Right cardiac atrium (tissue), 5 donors: ENCODE measurements at regions of chr9 and their contacts with region 1.

Region 1: GRCh38 chr9:91422758-91423711 is 597 bp downstream of the NFIL3 start:
- DNase-seq: peak; percentile 68 to 83 (median 83)
- ATAC-seq: peak; percentile 4 to 10
- H3K4me3 ChIP-seq: peak overlapping the region; percentile 100
- H3K27ac ChIP-seq: peak overlapping the region; percentile 97
- H3K4me1 ChIP-seq: peaks cover 9% of the 10 kb centered on the region
- H3K27me3 ChIP-seq: no peaks in the 10 kb centered on the region

Region 2: GRCh38 chr9:90147426-90147825 is 1275.6 kb before region 1 on chr9:
- intact Hi-C with region 1: no loop called
- DNase-seq: no peak
- ATAC-seq: no peak
- H3K4me3 ChIP-seq: no peak overlapping the region
- H3K27ac ChIP-seq: no peak overlapping the region
- H3K4me1 ChIP-seq: no peaks in the 10 kb centered on the region
- H3K27me3 ChIP-seq: no peaks in the 10 kb centered on the region

Region 3: DNA sequence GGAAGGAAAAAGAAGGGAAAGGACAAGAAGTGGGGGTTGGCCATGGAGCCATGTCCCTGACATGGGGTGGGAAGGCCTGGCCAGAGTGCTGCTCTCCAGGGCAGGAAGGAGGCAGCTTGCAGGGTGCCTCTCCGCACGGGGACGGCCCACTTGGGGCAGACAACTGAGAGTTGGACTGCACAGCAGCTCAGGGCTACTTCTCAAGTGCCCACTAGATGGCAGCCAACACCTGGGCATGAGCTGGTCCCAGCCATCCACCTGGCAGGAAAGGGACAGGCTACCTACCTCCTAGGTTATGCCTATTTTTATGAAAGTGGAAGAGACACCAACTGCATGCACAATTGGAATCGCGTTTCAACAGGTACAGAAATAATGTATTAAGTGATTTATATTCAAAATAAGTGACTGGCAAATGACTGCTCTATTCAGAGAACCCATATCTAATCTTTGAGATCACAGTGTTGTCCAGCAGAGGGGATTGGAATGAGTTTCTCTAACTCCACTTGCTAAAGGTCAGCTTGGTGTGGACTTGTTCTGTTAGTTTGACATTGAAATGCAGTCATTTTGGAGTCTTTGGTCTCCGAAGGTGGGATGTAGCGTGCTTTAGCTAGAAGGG is 508.1 kb before region 1 on chr9:
- intact Hi-C with region 1: loop called in 1 of 4 experiments (anchors 5 kb)
- DNase-seq: peak; percentile 63 to 87 (median 80)
- ATAC-seq: peak; percentile 81 to 90
- H3K4me3 ChIP-seq: no peak overlapping the region
- H3K27ac ChIP-seq: no peak overlapping the region
- H3K4me1 ChIP-seq: peaks cover 4% of the 10 kb centered on the region
- H3K27me3 ChIP-seq: no peaks in the 10 kb centered on the region

Region 4: DNA sequence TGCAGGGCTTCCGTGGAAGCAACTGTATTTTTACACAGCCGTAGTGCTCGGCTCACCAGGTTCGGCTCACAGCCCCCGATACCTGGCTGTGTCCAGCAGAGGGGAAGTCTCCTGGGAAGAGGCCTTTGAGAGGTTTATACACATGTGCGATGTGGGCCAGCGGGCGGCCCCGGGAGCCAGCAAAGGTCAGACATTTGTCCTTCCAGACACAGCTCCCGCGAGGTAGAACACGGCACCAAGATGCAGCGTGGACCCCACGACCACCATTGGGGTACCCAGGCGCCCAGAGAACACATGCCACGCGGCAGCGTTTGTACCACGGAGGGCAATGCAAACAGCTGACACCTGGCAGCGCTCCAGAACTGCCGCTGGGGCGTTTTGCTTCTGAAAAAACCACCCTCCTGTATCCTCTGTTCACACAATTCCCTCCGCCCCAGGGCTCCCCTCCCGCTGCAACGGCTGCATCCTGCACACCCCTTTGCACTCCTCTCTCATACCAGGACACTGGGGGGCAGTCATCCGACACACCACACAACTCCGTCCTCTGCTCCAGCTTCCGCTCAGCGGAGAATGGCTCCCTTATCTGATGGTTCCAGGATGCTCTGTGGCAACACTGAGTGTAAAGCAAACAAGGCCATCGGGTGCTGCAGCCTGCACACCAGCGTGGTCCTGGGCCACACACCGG is 386.1 kb before region 1 on chr9:
- intact Hi-C with region 1: loop called in 2 of 4 experiments (anchors 5 to 10 kb)
- DNase-seq: peak; percentile 83 to 86 (median 85)
- ATAC-seq: peak; percentile 97 to 98
- H3K4me3 ChIP-seq: no peak overlapping the region
- H3K27ac ChIP-seq: no peak overlapping the region
- H3K4me1 ChIP-seq: no peaks in the 10 kb centered on the region
- H3K27me3 ChIP-seq: no peaks in the 10 kb centered on the region

Region 5: GRCh38 chr9:91089405-91090129 is 333.5 kb before region 1 on chr9:
- intact Hi-C with region 1: loop called in 1 of 4 experiments (anchors 10 kb)
- DNase-seq: peak in 1 of 3 donors; percentile 58
- ATAC-seq: peak; percentile 59 to 62
- H3K4me3 ChIP-seq: no peak overlapping the region
- H3K27ac ChIP-seq: no peak overlapping the region
- H3K4me1 ChIP-seq: no peaks in the 10 kb centered on the region
- H3K27me3 ChIP-seq: no peaks in the 10 kb centered on the region

Region 6: GRCh38 chr9:91101611-91102168 is 321.3 kb before region 1 on chr9:
- intact Hi-C with region 1: loop called in 2 of 4 experiments (anchors 10 kb)
- DNase-seq: peak in 1 of 3 donors; percentile 49
- ATAC-seq: peak in 1 of 2 donors; percentile 18
- H3K4me3 ChIP-seq: no peak overlapping the region
- H3K27ac ChIP-seq: peak overlapping the region; percentile 80
- H3K4me1 ChIP-seq: peaks cover 14% of the 10 kb centered on the region
- H3K27me3 ChIP-seq: no peaks in the 10 kb centered on the region

Region 7: DNA sequence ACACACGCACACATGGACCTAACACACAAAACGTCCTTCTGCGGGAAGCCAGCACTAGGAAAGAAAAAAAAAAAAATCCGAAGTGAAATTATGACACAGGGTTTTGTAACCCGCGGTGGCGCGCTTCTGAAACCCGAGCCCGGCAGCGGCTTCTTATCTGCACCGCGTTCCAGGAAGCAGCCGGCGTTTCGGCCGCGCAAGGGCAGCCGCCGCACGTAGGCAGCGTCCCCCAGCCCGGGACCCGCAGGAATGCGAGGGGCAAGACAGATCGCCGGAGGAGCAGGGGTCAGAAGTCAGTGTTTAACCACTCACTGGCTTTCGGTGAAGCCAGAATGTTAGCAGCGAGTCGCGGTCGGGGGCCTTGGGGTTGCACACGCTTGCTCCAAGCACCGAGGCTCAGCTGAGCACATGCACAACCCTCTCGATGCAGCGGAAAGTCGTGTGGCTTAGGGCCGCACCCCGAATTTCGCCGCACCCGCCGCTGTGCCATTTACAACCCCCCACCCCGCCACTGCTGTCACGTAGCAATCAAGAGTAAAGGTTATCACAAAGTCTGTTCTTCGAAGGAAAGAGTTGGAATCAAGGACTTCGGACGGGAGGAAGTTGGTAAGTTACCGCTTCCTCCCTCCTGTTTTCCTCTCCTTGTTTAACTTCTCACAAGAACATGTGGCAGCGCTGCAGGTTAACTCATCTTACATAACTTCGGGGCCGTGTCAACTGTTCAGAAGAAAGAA is 229.2 kb before region 1 on chr9:
- intact Hi-C with region 1: loop called in 2 of 4 experiments (anchors 10 kb)
- DNase-seq: peak; percentile 91 to 96 (median 95)
- ATAC-seq: peak; percentile 80 to 83
- H3K4me3 ChIP-seq: peak overlapping the region; percentile 22
- H3K27ac ChIP-seq: peak overlapping the region; percentile 92
- H3K4me1 ChIP-seq: peaks cover 8% of the 10 kb centered on the region
- H3K27me3 ChIP-seq: no peaks in the 10 kb centered on the region

Region 8: GRCh38 chr9:91361291-91362050 is 61.6 kb before region 1 on chr9 and contains the start of gene AUH:
- intact Hi-C with region 1: loop called in 2 of 4 experiments (anchors 5 to 10 kb)
- DNase-seq: peak; percentile 88 to 95 (median 95)
- ATAC-seq: peak; percentile 99
- H3K4me3 ChIP-seq: peak within 1 kb of the TSS; percentile 99
- H3K27ac ChIP-seq: peak within 1 kb of the TSS; percentile 89
- H3K4me1 ChIP-seq: peaks cover 4% of the 10 kb centered on the region
- H3K27me3 ChIP-seq: no peaks in the 10 kb centered on the region
- total RNA-seq, gene AUH: 19.1 to 29.0 (median 24.8) TPM